ENCODE measurements at regions of chr6 and their contacts with region 1.

Region 1: GRCh38 chr6:143410859-143411270 is 39.6 kb downstream of the ADAT2 start:
- DNase-seq: peak; percentile 67
- H3K4me3 ChIP-seq: no peak overlapping the region
- H3K27ac ChIP-seq: no peak overlapping the region; the same call in 1 of the 2 replicates
- H3K4me1 ChIP-seq: peaks cover 17% of the 10 kb centered on the region
- H3K27me3 ChIP-seq: peaks cover 4% of the 10 kb centered on the region; the same call in 1 of the 2 replicates

Region 2: DNA sequence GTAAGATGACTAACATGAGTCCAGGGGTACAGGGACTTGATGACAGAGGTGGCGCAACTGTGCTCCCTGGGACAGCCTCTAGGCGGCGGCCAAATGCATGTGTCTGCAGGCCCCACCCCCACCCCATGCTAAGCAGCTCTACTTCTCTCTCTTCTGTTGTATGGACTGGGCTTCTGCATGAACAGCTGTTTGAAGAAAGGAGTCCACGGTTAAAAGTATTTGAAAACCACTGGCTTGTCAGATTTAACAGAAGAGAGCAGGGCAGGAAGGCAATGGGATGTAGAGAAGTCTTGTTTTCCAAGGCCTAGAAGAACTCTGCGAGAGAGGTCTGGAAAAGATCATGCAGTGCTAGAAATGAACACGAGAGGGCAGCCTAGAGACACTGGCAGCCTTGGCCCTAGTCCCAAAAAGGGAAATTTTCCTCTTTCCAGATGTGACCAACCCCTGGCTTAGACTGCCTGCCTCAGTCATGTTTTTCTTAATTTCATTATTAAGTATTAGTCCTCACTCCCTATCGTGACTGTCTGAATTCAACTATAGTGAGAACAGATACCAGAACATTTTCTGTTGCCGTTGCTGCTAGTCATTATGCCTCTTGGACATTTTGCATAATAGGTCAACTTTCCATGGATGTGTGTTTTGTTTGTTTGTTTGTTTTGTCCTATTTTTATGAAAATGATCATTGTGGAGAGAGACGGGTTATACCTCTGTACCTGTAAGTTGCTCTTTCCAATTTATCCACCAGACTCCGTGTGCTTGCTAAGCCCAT is 844.1 kb before region 1 on chr6:
- in situ Hi-C with region 1: loop called (anchors 10 kb)
- DNase-seq: peak; percentile 78
- H3K4me3 ChIP-seq: no peak overlapping the region
- H3K27ac ChIP-seq: no peak overlapping the region
- H3K4me1 ChIP-seq: peaks cover 41% of the 10 kb centered on the region
- H3K27me3 ChIP-seq: no peaks in the 10 kb centered on the region

Region 3: DNA sequence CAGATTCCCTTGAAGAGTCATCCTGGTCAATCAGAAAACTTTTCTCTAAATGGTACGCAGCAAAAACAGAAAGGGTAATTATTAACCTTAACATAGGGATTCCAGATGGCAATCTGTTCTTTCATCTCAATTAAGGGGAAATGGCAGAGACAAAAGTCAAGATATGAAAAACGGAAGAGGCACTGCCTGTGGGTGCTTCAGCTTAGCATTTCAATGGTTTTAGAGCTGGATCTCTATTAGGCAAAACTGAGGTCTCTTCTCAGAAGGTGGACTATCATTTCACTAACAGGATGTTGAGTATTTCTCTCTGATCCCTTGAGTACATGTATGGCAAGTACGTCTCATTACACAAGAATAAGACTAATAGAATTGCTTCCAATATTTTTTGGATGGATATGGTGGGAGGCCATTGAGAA is 762.8 kb before region 1 on chr6:
- in situ Hi-C with region 1: no loop called
- DNase-seq: no peak
- H3K4me3 ChIP-seq: no peak overlapping the region
- H3K27ac ChIP-seq: no peak overlapping the region
- H3K4me1 ChIP-seq: no peaks in the 10 kb centered on the region
- H3K27me3 ChIP-seq: peaks cover 24% of the 10 kb centered on the region

Region 4: DNA sequence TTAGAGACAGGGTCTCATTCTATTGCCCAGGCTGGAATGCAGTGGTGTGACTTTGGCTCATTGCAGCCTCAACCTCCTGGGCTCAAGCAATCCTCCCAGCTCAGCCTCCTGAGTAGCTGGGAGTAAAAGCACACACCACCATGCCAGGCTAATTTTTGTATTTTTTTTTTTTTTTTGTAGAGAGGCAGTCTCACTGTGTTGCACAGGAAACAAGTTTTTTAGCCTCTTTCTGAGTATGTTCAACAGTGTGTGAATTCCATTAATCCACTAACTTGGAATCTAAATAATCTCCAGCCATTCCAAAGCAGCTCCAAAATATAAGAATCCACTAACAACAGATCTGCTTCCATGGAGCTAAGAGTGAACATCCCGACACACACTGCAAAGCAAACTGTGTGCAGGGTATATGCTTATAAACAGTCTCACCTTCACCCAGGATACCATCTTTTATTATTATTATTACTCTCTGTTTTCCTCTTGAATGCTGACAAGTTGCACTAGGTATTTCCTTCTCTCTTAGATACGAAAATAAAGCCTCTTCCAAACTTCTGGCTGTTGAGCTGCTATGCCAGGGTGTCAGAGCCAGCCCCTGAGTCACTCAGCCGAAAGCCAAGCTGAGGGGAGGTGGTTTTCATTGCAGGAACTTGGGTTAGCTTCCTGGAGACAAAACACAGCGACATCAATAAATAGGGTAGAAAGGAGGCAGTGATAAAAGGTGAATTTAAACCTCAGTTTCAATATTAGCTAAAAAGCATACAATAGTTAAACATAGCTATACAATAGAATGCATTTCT is 730.8 kb before region 1 on chr6:
- in situ Hi-C with region 1: loop called (anchors 10 kb)
- DNase-seq: peak; percentile 85
- H3K4me3 ChIP-seq: peak overlapping the region; percentile 38; the same call in 1 of the 2 replicates
- H3K27ac ChIP-seq: peak overlapping the region; percentile 46
- H3K4me1 ChIP-seq: peaks cover 18% of the 10 kb centered on the region
- H3K27me3 ChIP-seq: peaks cover 20% of the 10 kb centered on the region; the same call in 1 of the 2 replicates

Region 5: DNA sequence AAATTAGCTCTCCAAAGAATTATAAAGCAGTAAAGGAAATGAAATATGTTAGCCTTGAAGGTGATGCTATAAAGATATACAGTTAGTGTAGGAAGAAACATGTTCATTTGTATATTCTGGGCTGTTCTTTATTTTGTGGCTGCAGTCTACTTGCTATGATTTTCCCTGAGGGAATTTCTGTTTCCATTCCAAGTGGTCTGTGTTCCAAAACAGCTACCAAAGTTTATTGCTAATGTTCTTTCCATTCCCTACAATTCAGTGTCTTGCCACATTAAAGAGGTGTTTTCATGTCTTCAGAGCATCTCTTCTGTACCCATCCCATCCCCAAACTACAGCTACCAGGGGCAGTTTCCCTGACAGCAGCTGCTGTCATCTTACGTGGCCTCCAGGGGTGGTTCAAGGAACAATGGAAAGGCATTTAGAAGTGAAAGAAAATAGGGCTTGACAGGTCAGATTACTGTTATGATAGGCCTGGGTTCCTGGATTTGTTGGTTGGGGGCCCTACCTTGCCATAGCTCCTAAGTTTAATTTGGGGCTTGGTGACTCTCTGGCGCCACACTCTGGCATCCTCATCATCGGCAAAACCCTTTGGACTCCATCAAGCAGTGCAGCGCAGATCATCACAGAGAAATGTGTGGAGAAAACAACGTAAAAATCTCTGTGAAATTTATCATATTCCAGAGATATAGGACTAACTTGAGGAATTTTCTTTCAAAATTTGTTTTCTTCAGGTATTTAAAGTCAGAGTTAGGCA is 384.0 kb before region 1 on chr6:
- in situ Hi-C with region 1: no loop called
- DNase-seq: peak; percentile 23
- H3K4me3 ChIP-seq: no peak overlapping the region
- H3K27ac ChIP-seq: no peak overlapping the region
- H3K4me1 ChIP-seq: no peaks in the 10 kb centered on the region; the same call in 1 of the 2 replicates
- H3K27me3 ChIP-seq: no peaks in the 10 kb centered on the region